KBM-7 (cell line): ENCODE measurements at regions of chr7 and their contacts with region 1.

Region 1: GRCh38 chr7:16564909-16565426 is 38.3 kb downstream of the LRRC72 start:
- DNase-seq: peak; percentile 71

Region 2: DNA sequence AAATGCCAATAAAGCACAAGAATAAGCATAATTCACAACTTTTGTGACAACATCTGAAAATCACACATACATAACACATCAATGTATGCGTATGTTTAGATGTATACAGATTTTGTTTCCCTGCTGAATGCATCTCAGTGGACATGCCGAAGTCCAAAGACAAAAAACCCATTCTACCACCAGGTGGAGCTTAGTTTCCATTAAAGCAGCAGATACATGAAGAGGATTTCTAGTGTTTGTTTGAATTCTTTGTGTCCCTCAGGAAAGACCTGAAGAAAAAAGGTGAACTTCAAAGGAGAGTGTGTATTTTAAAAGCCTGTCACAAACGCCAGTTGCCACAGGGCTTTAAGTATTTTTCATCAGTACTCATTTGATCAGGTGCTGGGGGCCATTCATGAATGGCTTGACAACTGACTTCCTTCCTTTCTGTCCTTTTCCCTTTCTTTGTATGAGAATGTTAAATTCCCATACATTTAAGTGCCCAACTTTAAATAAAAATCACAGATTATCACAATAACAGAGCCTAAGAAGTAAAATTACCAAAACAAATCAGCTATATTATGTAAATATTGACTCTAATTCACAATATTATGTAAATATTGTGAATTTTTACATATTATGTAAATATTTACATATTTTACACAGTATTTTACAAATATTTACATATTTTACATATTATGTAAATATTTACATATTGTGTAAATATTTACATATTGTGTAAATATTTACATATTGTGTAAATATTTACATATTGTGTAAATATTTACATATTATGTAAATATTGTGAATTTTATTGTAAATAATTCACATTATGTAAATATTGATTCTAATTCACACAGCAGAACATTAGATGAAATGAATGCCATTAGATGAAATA is 486.7 kb before region 1 on chr7:
- in situ Hi-C with region 1: loop called (anchors 25 kb)
- DNase-seq: peak; percentile 75

Region 3: DNA sequence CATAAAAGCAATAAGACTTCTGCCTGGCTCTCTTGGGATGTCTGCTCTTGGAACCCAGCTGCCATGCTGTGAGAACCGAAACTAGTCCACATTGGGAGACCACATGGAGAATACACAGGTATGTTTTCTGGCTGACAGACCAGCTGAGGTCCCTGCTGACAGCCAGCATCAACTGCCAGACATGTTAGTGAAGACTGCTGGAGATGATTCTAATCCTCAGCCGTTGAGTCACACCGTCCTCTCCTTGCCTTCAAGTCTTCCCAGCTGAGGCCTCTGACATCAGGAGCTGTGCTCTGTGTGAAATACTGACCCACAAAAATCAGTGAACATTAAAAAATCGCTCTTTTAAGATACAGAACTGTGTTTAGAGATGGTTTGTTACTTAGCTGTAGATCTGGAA is 276.7 kb after region 1 on chr7:
- in situ Hi-C with region 1: no loop called
- DNase-seq: no peak

Region 4: DNA sequence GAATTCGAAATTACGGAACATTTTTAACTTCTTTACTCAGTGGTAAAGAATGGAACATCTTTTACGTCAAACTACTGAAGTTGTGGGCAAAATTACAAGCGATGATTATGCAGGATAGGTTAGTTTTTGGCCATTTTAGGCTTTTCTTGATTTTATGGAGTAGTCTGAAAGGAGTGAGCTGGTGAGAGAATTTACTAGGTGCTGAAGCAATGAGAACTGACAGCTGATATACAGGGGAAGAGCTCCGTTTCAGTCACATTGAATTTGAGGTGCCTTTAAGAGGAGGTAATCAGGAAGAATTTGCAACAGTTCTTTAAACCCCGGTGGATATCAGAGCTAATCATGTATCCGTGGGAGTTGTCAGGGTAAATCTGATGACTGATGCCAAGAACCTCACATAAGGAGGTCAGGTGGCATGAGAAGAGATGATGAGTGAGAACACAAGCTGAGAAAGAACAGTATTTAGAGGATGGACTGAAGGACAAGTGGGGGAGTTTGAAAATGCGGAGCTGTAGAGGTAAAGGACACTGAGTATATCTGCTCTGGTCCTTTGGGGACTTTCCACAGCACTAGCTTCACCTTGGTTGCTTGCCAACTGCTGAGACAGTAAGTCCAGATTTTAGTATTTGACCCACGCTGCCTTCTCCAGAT is 837.8 kb after region 1 on chr7:
- in situ Hi-C with region 1: no loop called
- DNase-seq: no peak